PC-9 (cell line): ENCODE measurements at regions of chr7 and their contacts with region 1.

Region 1: GRCh38 chr7:106659963-106660861 is 746 bp downstream of the CCDC71L start:
- DNase-seq: peak; percentile 54 to 86
- H3K4me3 ChIP-seq: peak overlapping the region; percentile 81
- H3K27ac ChIP-seq: peak overlapping the region; percentile 71
- H3K4me1 ChIP-seq: peaks cover 19% of the 10 kb centered on the region
- H3K27me3 ChIP-seq: no peaks in the 10 kb centered on the region
- CTCF ChIP-seq: peak; percentile 77

Region 2: DNA sequence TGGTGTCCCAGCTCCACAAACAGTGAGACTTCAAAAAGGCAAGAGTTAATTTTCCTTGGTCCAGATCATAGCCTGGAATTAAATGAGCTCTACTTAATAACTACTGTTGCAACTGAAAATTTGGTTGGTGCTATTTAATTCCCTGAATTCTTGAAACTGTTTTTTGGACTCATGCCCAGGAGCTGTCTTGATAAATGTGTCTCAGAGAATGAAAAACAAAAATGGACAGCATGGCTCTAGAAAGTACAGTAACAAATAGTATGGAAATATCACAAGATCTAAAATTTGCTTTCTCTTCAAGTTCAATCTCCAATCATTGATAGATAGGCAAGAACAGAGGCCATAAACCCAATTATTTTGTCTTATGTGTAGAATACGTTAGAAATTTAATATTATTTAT is 41.7 kb before region 1 on chr7:
- CTCF ChIA-PET with region 1: no interaction called
- POLR2A ChIA-PET with region 1: no interaction called
- intact Hi-C with region 1: no loop called
- DNase-seq: no peak
- H3K4me3 ChIP-seq: no peak overlapping the region
- H3K27ac ChIP-seq: no peak overlapping the region
- H3K4me1 ChIP-seq: peaks cover 2% of the 10 kb centered on the region; the same call in 1 of the 2 replicates
- H3K27me3 ChIP-seq: no peaks in the 10 kb centered on the region
- CTCF ChIP-seq: no peak

Region 3: GRCh38 chr7:106643216-106644000 is 16.8 kb before region 1 on chr7:
- CTCF ChIA-PET with region 1: interaction called, 11 read pairs
- POLR2A ChIA-PET with region 1: no interaction called
- intact Hi-C with region 1: no loop called
- DNase-seq: no peak
- H3K4me3 ChIP-seq: no peak overlapping the region
- H3K27ac ChIP-seq: no peak overlapping the region
- H3K4me1 ChIP-seq: no peaks in the 10 kb centered on the region
- H3K27me3 ChIP-seq: no peaks in the 10 kb centered on the region
- CTCF ChIP-seq: no peak

Region 4: GRCh38 chr7:106717955-106718871 is 58.0 kb after region 1 on chr7:
- CTCF ChIA-PET with region 1: interaction called, 7 read pairs
- POLR2A ChIA-PET with region 1: no interaction called
- intact Hi-C with region 1: loop called (anchors 1 kb)
- DNase-seq: peak; percentile 60 to 94
- H3K4me3 ChIP-seq: peak overlapping the region; percentile 17; the same call in 1 of the 2 replicates
- H3K27ac ChIP-seq: peak overlapping the region; percentile 85
- H3K4me1 ChIP-seq: peaks cover 30% of the 10 kb centered on the region
- H3K27me3 ChIP-seq: no peaks in the 10 kb centered on the region
- CTCF ChIP-seq: no peak

Region 5: GRCh38 chr7:106947244-106947728 is 287.1 kb after region 1 on chr7:
- CTCF ChIA-PET with region 1: no interaction called
- POLR2A ChIA-PET with region 1: no interaction called
- intact Hi-C with region 1: loop called (anchors 10 kb)
- DNase-seq: peak; percentile 50 to 60
- H3K4me3 ChIP-seq: no peak overlapping the region
- H3K27ac ChIP-seq: no peak overlapping the region
- H3K4me1 ChIP-seq: no peaks in the 10 kb centered on the region
- H3K27me3 ChIP-seq: no peaks in the 10 kb centered on the region; the same call in 1 of the 2 replicates
- CTCF ChIP-seq: peak; percentile 75

Region 6: DNA sequence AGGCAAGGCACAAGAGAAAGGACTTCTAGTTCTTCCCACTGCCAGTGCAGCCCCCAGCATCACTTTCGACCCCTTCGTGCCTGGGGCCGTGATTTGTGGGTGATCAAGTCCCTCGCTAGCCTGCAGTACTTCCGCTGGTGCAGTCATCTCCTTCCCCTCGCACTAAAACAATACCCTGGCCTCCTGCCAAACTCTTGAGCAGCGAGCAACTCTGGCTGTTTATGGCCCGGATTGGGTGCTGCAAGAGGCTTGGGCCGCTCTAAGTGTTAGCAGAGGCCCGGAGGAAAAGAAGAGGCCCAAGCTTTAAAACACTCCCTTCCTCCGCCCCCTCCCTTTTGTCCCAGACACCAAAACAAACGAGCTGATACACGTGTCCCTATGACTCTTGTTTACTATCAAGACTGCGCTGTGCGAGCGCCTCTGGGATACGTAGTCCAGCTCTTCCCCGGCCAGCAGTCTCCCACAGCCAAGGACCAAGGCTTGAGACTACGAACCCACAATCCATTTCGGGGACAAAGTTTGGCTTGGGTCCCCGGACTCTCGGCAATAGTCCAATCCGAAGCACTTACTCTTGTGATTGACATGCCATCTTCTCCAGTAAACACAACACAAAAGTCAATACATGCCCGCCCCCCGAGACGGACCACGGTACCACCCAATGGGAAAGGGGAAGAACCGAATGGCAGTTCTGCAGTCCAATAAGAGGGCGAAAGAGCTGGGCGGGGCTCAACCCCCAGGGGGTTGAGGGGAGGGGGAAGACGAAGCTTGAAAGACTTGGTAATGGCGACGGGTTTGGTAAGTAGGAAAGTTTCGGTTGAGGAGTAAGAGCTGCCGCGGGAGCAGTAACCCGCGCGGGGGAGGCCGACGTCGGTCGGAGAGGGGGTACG is 508.3 kb after region 1 on chr7 and contains the start of gene HBP1:
- CTCF ChIA-PET with region 1: no interaction called
- POLR2A ChIA-PET with region 1: interaction called, 8 read pairs
- intact Hi-C with region 1: loop called (anchors 5 kb)
- DNase-seq: peak; percentile 99
- H3K4me3 ChIP-seq: peak within 1 kb of the TSS; percentile 77
- H3K27ac ChIP-seq: peak within 1 kb of the TSS; percentile 86
- H3K4me1 ChIP-seq: peaks cover 26% of the 10 kb centered on the region
- H3K27me3 ChIP-seq: no peaks in the 10 kb centered on the region
- CTCF ChIP-seq: no peak
- total RNA-seq, gene HBP1: 60.0 and 62.1 TPM in 2 replicates